MCF 10A (cell line): ENCODE measurements at regions of chr2 and their contacts with region 1.

Region 1: DNA sequence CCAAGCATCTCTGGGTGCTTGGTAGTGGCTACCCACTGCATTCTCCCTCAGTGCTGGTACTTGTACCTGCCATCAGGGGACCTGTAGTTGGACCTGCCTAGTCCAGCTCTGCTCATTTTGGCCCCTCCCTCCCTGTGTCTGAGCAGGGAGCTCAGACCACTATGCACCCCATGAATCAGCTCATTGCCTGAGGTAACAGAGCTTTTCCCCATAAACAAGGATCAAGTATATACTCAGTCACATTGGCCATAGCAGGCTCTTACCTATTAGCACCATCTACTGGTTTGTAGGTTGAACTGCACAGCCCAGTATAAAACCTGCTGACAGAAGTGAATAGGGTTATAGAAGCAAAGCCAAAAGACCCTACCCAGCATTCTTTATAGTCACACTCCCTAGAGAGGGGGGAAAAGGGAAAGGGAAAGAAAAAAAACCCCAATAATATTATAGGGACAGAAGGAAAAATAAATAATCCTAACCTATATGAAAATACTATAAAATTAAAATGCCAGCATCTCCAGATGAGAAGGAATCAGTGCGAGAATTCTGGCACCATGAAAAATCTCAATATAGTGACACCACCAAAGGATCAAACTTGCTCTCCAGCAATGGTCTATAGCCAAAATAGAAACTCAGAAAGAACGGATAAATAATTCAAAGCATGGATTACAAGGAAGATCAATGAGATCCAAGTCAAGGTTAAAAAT is 6.9 kb upstream of the FLACC1 start:
- DNase-seq: peak; percentile 68
- H3K4me3 Mint-ChIP-seq: no peak overlapping the region
- H3K27ac Mint-ChIP-seq: peak overlapping the region; percentile 49
- H3K4me1 Mint-ChIP-seq: peaks cover 5% of the 10 kb centered on the region
- H3K27me3 Mint-ChIP-seq: no peaks in the 10 kb centered on the region
- CTCF ChIP-seq: peak; percentile 79

Region 2: DNA sequence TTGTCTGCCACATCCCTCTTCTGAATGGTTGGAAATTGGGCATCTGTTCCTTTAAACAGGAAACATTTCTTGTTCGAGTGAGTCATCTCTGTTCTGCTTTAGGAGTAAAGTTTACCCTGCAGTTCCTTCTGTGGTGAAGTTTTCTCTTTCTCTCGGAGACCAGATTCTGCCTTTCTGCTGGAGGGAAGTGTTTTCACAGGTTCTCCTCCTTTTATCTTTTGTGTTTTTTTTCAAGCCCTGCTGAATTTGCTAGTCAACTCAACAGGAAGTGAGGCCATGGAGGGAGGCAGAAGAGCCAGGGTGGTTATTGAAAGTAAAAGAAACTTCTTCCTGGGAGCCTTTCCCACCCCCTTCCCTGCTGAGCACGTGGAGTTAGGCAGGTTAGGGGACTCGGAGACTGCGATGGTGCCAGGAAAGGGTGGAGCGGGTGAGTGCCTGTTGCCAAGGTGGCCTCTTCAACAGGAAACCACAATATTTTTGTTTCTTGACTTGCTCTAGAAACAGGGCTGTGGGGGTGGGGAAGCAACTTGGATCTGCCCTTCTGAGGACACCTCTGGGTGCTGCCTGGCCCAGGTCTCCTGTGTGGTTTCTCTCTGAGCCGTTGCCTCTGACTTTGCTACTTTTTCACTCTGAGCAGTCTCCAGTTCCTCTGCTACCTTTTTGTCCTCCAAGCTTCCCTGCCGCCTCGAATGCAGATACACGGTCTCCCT is 105.9 kb before region 1 on chr2:
- CTCF ChIA-PET with region 1: interaction called, 6 read pairs
- POLR2A ChIA-PET with region 1: no interaction called
- intact Hi-C with region 1: loop called (anchors 1 kb)
- DNase-seq: peak; percentile 98
- H3K4me3 Mint-ChIP-seq: peak overlapping the region; percentile 95
- H3K27ac Mint-ChIP-seq: peak overlapping the region; percentile 99
- H3K4me1 Mint-ChIP-seq: peaks cover 20% of the 10 kb centered on the region
- H3K27me3 Mint-ChIP-seq: no peaks in the 10 kb centered on the region
- CTCF ChIP-seq: no peak

Region 3: GRCh38 chr2:201460532-201460931 is 96.5 kb after region 1 on chr2:
- CTCF ChIA-PET with region 1: no interaction called
- POLR2A ChIA-PET with region 1: no interaction called
- intact Hi-C with region 1: no loop called
- DNase-seq: no peak
- H3K4me3 Mint-ChIP-seq: no peak overlapping the region
- H3K27ac Mint-ChIP-seq: no peak overlapping the region
- H3K4me1 Mint-ChIP-seq: no peaks in the 10 kb centered on the region
- H3K27me3 Mint-ChIP-seq: no peaks in the 10 kb centered on the region
- CTCF ChIP-seq: no peak